PC-9 (cell line): ENCODE measurements at regions of chr6 and their contacts with region 1.

Region 1: DNA sequence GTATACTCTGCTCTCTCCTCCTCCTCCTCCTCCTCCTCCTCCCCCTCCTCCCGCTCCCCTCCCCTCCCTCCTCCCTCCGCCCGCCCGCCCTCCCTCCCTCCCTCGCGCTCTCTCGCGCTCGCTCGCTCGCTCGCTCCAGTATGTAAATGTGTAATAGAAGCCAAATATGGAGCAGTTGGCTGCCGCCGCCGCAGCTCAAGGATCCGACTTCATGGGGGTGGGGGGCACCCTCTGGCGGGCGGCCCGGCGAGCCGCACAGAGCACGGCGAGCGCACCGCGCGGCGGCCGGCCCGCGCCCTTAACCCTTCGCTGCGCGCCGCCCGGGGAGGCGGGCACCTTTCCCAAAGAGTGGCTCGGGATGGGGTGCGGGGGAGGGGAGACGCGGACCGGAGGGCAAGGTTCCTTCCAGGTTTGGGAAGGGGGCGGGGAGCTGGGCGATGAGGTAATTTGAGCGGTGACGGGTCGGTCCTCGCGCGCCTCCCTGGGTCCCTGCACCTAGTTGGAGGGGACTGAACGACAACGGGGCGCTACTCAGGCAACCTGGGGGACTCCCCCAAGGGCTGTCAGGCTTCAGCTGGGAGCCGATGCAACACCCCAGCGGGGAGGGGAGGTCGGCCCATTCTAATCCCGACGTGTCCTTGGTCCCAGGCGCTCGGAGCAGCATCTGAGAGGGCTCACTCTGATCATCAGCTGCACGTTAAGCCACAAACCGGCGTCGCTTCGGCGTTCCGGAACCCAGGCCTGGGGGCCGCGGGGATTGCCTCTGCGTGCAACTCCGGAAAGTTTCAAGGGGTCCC is 409 bp upstream of the ATXN1 start:
- DNase-seq: peak; percentile 72 to 90
- H3K4me3 ChIP-seq: peak overlapping the region; percentile 84
- H3K27ac ChIP-seq: peak overlapping the region; percentile 97
- H3K4me1 ChIP-seq: peaks cover 61% of the 10 kb centered on the region
- H3K27me3 ChIP-seq: no peaks in the 10 kb centered on the region
- CTCF ChIP-seq: no peak; the same call in 1 of the 2 replicates

Region 2: GRCh38 chr6:15691250-15691869 is 1070.3 kb before region 1 on chr6:
- CTCF ChIA-PET with region 1: no interaction called
- POLR2A ChIA-PET with region 1: no interaction called
- intact Hi-C with region 1: loop called (anchors 5 kb)
- DNase-seq: peak; percentile 69 to 72
- H3K4me3 ChIP-seq: no peak overlapping the region
- H3K27ac ChIP-seq: no peak overlapping the region
- H3K4me1 ChIP-seq: no peaks in the 10 kb centered on the region
- H3K27me3 ChIP-seq: peaks cover 28% of the 10 kb centered on the region
- CTCF ChIP-seq: peak; percentile 97

Region 3: DNA sequence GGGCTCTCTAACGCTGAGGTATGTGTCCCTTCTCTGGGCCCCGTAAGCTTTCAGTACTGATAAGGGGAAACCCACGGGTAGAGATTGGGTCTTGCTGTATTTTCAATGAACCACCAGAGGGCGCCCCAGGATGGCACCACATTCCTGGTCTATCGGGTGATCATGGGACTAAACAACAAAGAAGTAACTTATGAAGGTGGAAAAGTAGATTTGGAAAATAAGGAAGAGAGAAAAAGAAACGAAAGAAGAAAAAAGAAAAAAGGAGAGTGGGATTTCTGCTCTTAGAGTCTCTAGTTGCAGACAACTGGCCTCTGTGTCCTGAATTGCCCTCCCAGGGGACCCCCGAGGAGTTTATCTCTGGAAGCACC is 429.5 kb before region 1 on chr6:
- CTCF ChIA-PET with region 1: interaction called, 6 read pairs
- POLR2A ChIA-PET with region 1: no interaction called
- intact Hi-C with region 1: loop called (anchors 1 kb)
- DNase-seq: peak; percentile 62 to 76
- H3K4me3 ChIP-seq: no peak overlapping the region
- H3K27ac ChIP-seq: no peak overlapping the region
- H3K4me1 ChIP-seq: peaks cover 40% of the 10 kb centered on the region
- H3K27me3 ChIP-seq: no peaks in the 10 kb centered on the region
- CTCF ChIP-seq: peak; percentile 92

Region 4: GRCh38 chr6:16438718-16439591 is 322.7 kb before region 1 on chr6:
- CTCF ChIA-PET with region 1: interaction called, 10 read pairs
- POLR2A ChIA-PET with region 1: no interaction called
- intact Hi-C with region 1: no loop called
- DNase-seq: peak in 1 of 2 experiments; percentile 25
- H3K4me3 ChIP-seq: no peak overlapping the region
- H3K27ac ChIP-seq: peak overlapping the region; percentile 62
- H3K4me1 ChIP-seq: peaks cover 6% of the 10 kb centered on the region
- H3K27me3 ChIP-seq: no peaks in the 10 kb centered on the region
- CTCF ChIP-seq: no peak

Region 5: GRCh38 chr6:16676978-16677377 is 84.7 kb before region 1 on chr6:
- CTCF ChIA-PET with region 1: no interaction called
- POLR2A ChIA-PET with region 1: interaction called, 5 read pairs
- intact Hi-C with region 1: loop called (anchors 2 kb)
- DNase-seq: peak; percentile 60 to 83
- H3K4me3 ChIP-seq: no peak overlapping the region
- H3K27ac ChIP-seq: peak overlapping the region; percentile 73
- H3K4me1 ChIP-seq: peaks cover 54% of the 10 kb centered on the region
- H3K27me3 ChIP-seq: no peaks in the 10 kb centered on the region
- CTCF ChIP-seq: no peak

Region 6: DNA sequence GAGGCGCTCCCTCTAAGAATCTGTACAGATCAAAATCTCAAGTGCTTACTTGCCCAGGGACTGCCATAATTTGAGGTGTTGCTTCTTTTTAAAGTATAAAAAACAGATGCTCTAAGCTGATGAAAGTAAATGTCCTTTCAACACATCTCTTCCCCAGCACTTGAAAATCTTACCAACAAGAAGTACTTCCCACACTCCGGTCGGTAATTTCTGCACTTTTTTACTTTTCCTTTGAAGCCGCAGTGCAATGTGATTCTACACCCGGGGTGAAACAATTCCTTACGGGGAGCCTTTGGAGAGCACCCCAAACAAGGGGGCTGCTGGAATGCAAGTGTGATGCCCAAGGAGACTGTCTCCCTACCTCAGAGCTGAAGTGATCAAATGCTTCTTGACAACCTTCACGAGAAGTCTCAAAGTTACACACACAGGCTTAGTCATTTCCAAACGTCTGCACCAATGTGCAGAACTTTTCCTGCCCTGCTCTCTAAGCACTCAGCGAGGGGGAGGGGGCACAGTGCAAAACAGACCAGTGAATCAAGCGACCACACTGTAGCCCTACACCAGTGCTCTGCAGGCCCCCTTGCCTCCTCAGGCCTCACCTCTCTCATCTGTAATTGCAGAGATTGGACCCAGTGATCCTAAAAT is 57.1 kb before region 1 on chr6:
- CTCF ChIA-PET with region 1: no interaction called
- POLR2A ChIA-PET with region 1: no interaction called
- intact Hi-C with region 1: no loop called
- DNase-seq: no peak
- H3K4me3 ChIP-seq: no peak overlapping the region
- H3K27ac ChIP-seq: no peak overlapping the region
- H3K4me1 ChIP-seq: peaks cover 5% of the 10 kb centered on the region
- H3K27me3 ChIP-seq: no peaks in the 10 kb centered on the region
- CTCF ChIP-seq: no peak

Region 7: GRCh38 chr6:16933532-16933931 is 171.9 kb after region 1 on chr6:
- CTCF ChIA-PET with region 1: no interaction called
- POLR2A ChIA-PET with region 1: no interaction called
- intact Hi-C with region 1: no loop called
- DNase-seq: no peak
- H3K4me3 ChIP-seq: no peak overlapping the region
- H3K27ac ChIP-seq: no peak overlapping the region
- H3K4me1 ChIP-seq: no peaks in the 10 kb centered on the region
- H3K27me3 ChIP-seq: no peaks in the 10 kb centered on the region
- CTCF ChIP-seq: no peak

Region 8: DNA sequence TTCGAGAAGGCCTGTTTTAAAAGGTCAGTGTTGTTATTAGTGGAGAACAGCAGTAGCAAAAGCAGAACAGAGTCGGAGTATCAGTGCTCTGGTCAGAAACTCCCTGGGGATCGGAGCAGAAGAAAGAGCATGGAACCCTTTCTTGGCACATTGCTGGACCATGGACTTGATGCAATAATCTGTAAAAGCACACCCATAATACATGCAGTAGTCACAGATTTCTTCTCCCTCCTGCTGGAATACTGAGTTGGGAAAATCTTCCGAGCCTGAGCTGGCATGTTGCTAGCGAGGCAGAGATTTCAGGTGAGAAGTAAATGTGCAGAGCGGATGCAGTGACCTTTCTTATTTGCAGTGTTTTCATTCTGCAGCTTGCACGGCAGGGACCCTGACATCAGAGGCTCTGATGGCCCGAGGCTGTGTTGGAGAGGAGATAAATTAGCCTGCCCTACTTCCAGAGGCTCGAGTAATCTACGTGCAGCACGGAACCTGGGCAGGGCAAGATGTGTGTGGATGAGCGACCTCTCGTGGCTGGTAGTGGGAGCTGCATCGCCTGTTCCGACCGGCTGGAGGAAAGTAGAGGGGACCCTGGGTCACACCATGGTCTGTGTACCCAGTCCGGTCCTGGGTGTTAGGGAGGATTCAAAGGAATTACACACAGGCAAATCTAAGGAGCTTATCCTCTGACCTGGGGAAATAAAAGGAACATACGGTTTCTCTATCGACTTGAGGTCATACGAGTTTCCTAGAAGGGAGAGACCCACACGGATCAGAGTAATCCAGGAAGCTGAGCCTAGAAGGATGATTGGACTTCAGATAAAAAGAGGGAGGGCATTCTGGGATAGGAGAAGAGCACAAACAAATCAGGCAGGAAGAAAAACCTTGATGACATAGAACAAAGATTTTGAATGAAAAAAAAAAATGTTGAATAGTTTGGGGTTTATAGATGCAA is 203.2 kb after region 1 on chr6:
- CTCF ChIA-PET with region 1: interaction called, 16 read pairs
- POLR2A ChIA-PET with region 1: interaction called, 6 read pairs
- intact Hi-C with region 1: loop called (anchors 1 kb)
- DNase-seq: peak; percentile 77 to 82
- H3K4me3 ChIP-seq: 0 out of 2 replicates have a peak overlapping the region, but pooled peaks have one; percentile 22
- H3K27ac ChIP-seq: no peak overlapping the region
- H3K4me1 ChIP-seq: peaks cover 13% of the 10 kb centered on the region
- H3K27me3 ChIP-seq: no peaks in the 10 kb centered on the region
- CTCF ChIP-seq: peak; percentile 92

Region 9: DNA sequence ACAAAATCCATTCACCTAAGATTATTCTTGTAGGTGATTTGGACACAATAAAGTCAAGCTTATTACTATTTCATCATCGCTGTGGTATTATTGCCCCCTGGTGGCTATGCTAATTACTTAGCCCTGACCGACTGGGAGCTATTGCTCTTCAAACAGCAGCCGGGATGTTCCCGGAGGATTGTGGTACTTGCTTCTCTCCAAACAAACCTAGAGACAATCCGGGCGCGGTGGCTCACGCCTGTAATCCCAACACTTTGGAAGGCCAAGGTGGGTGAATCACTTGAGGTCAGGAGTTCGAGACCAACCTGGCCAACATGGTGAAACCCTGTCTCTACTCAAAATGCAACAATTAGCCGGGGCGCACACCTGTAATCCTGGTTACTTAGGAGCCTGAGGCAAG is 324.8 kb after region 1 on chr6:
- CTCF ChIA-PET with region 1: interaction called, 10 read pairs
- POLR2A ChIA-PET with region 1: no interaction called
- intact Hi-C with region 1: loop called (anchors 1 kb)
- DNase-seq: peak; percentile 55 to 64
- H3K4me3 ChIP-seq: no peak overlapping the region
- H3K27ac ChIP-seq: no peak overlapping the region
- H3K4me1 ChIP-seq: no peaks in the 10 kb centered on the region
- H3K27me3 ChIP-seq: no peaks in the 10 kb centered on the region
- CTCF ChIP-seq: peak; percentile 83